ENCODE measurements at regions of chr17 and their contacts with region 1.

Region 1: DNA sequence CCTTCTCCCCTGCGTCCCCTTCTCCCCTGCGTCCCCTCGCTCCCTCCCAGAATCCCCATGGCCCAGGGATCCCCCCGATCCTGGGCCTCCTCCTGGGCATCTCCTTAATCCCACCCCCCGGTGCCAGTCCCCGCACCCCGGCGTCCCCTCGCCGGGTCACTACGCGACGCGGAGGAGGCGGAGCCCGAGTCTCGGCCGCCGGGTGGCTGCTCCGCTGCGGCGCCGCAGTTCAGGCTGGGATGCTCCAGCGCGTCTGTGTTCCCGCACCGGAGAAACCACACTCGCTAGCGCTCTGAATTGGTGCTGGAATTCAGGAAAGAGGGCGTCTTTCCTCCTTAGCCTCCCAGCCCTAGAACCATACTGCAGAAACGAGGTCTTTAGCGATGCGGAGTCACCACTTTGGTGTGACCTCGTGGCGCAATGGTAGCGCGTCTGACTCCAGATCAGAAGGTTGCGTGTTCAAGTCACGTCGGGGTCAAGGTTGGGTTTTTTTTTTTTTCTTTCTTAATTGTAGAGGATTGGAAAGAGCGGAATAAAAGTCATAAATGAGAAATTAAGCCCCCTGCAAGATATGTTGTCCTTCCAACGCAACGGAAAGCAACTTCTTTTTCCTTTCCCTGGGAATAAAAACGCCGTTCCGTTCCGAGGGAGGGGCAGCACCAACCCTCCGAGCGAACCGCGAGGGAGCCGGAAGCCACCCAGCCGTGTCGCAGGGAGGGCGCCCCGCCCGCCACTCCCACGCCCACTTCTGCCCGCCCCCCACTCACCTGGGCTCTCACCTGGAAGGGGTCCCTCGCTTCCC is 25.7 kb upstream of the SLC47A1 start:
- DNase-seq: peak; percentile 87
- ATAC-seq: peak; percentile 85
- H3K4me3 Mint-ChIP-seq: peak overlapping the region; percentile 82
- H3K27ac Mint-ChIP-seq: peak overlapping the region; percentile 89
- H3K4me1 Mint-ChIP-seq: peaks cover 7% of the 10 kb centered on the region
- H3K27me3 Mint-ChIP-seq: peaks cover 2% of the 10 kb centered on the region

Region 2: DNA sequence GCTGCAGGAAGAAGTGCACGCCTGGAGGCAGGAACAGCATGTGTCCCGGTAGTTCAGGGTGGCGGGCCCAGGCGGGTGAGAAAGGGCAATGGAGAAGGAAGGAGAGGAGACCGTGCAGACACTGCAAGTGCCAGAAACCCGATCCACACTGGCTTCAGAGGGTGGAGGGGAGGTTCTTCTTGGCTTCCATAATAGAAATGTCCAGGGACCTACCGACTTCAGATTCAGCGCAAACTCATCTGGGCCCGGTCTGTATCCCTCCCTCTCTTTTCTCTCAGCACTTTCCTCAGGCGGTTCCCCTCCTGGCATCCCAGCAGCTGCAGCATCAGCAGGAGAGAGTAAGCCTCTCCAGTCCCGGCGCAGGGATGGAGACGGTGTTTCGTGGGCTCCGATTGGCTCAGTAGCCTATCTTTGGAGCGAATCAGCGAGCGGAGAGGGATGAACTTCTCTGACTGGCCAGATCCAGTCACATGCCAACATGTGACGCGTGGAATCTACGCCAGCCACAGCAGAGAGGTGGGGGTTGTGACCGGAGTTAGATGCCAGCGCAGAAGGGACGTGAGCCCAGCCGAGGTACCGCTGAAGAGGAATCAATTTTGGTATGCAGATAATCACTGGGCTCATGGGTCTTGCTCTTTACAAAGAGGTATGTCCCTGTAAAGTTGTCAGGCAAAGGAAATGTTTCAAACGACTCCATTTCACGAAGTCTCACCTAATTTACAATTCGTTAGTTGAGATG is 652.0 kb before region 1 on chr17:
- CTCF ChIA-PET with region 1: no interaction called
- POLR2A ChIA-PET with region 1: no interaction called
- intact Hi-C with region 1: loop called in 1 of 2 experiments (anchors 5 kb)
- DNase-seq: peak; percentile 94
- ATAC-seq: peak; percentile 85
- H3K4me3 Mint-ChIP-seq: peak overlapping the region; percentile 92
- H3K27ac Mint-ChIP-seq: peak overlapping the region; percentile 90
- H3K4me1 Mint-ChIP-seq: peaks cover 45% of the 10 kb centered on the region
- H3K27me3 Mint-ChIP-seq: no peaks in the 10 kb centered on the region

Region 3: GRCh38 chr17:19520641-19521040 is 12.7 kb after region 1 on chr17:
- CTCF ChIA-PET with region 1: no interaction called
- POLR2A ChIA-PET with region 1: no interaction called
- intact Hi-C with region 1: no loop called
- DNase-seq: no peak
- ATAC-seq: no peak
- H3K4me3 Mint-ChIP-seq: no peak overlapping the region
- H3K27ac Mint-ChIP-seq: no peak overlapping the region
- H3K4me1 Mint-ChIP-seq: peaks cover 2% of the 10 kb centered on the region
- H3K27me3 Mint-ChIP-seq: peaks cover 9% of the 10 kb centered on the region

Region 4: GRCh38 chr17:19596869-19597268 is 88.9 kb after region 1 on chr17:
- CTCF ChIA-PET with region 1: no interaction called
- POLR2A ChIA-PET with region 1: no interaction called
- intact Hi-C with region 1: no loop called
- DNase-seq: no peak
- ATAC-seq: no peak
- H3K4me3 Mint-ChIP-seq: no peak overlapping the region
- H3K27ac Mint-ChIP-seq: no peak overlapping the region
- H3K4me1 Mint-ChIP-seq: no peaks in the 10 kb centered on the region
- H3K27me3 Mint-ChIP-seq: peaks cover 2% of the 10 kb centered on the region

Region 5: DNA sequence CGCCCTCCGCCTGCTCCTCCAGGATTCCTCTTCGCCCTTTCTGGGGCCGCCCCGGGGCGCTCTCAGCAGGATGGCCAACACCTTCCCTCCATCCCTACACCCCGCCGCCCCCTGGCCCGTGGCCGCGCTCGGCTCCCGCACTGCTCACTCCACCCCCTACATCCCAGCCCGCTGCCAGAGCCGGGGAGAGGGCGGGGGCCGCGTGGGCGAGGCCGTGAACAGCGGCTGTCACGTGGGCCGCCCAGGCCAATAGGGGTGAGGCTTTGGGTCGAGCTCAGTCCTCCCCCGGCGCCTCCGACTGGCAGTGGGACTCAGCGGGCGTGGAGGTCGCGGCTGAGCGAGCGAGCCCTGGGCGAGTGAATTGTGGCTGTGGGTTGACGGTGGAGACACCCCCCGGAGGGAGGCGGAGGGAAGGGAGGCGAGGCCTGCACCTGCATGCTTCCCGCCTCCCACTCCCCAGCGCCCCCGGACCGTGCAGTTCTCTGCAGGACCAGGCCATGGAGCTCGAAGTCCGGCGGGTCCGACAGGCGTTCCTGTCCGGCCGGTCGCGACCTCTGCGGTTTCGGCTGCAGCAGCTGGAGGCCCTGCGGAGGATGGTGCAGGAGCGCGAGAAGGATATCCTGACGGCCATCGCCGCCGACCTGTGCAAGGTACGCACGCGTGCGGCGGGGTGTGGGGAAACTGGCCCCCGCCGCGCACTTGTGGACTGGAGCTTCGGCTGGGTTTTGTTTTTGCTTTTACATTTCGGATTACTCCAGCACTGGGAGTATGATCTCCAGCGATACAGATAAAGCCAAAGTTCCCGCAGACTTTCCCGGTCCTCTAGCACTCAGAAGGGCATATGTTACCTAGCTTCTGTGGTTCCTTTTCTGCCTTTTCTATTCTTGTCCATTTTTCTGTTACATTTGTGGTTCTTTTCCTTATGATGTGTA is 140.8 kb after region 1 on chr17 and contains the start of gene ALDH3A2:
- CTCF ChIA-PET with region 1: interaction called, 18 read pairs
- POLR2A ChIA-PET with region 1: no interaction called
- intact Hi-C with region 1: loop called (anchors 1 to 2 kb)
- DNase-seq: peak; percentile 97
- ATAC-seq: peak; percentile 94
- H3K4me3 Mint-ChIP-seq: peak within 1 kb of the TSS; percentile 79
- H3K27ac Mint-ChIP-seq: peak within 1 kb of the TSS; percentile 87
- H3K4me1 Mint-ChIP-seq: peaks cover 38% of the 10 kb centered on the region
- H3K27me3 Mint-ChIP-seq: peaks cover 1% of the 10 kb centered on the region
- total RNA-seq, gene ALDH3A2: 18.5 to 23.9 TPM

Region 6: DNA sequence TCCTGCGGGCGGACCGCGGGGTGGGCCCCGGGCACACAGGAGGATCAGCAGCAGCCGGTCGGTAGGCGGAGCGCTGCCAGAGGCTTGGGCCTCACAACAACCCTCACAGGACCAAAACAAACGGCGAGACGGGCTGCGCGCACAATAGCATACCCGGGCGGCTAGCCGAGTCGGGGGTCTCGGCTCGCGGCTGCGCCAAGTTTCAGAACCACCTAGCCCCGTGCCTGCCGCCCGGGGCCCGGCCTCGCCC is 359.0 kb after region 1 on chr17:
- CTCF ChIA-PET with region 1: no interaction called
- POLR2A ChIA-PET with region 1: no interaction called
- intact Hi-C with region 1: loop called in 1 of 2 experiments (anchors 1 kb)
- DNase-seq: peak; percentile 72
- ATAC-seq: peak; percentile 67
- H3K4me3 Mint-ChIP-seq: peak overlapping the region; percentile 80
- H3K27ac Mint-ChIP-seq: peak overlapping the region; percentile 65
- H3K4me1 Mint-ChIP-seq: peaks cover 21% of the 10 kb centered on the region
- H3K27me3 Mint-ChIP-seq: no peaks in the 10 kb centered on the region